Prostate gland (tissue), 2 donors: ENCODE measurements at regions of chr15 and their contacts with region 1.

Region 1: GRCh38 chr15:25863111-25863967 is at the start of gene ATP10A:
- DNase-seq: no peak
- H3K4me3 ChIP-seq: peak within 1 kb of the TSS; percentile 49 to 56
- H3K27ac ChIP-seq: peak within 1 kb of the TSS; percentile 66 to 72
- H3K4me1 ChIP-seq: peaks cover 5% of the 10 kb centered on the region
- H3K27me3 ChIP-seq: no peaks in the 10 kb centered on the region
- CTCF ChIP-seq: no peak
- POLR2A ChIP-seq: no peak
- total RNA-seq, gene ATP10A: 5.6 to 14.3 TPM

Region 2: GRCh38 chr15:25933456-25934158 is 70.3 kb after region 1 on chr15:
- intact Hi-C with region 1: loop called (anchors 10 kb)
- DNase-seq: peak; percentile 57
- H3K4me3 ChIP-seq: no peak overlapping the region
- H3K27ac ChIP-seq: no peak overlapping the region
- H3K4me1 ChIP-seq: no peaks in the 10 kb centered on the region
- H3K27me3 ChIP-seq: no peaks in the 10 kb centered on the region
- CTCF ChIP-seq: peak; percentile 27 to 66 (median 50)
- POLR2A ChIP-seq: no peak

Region 3: DNA sequence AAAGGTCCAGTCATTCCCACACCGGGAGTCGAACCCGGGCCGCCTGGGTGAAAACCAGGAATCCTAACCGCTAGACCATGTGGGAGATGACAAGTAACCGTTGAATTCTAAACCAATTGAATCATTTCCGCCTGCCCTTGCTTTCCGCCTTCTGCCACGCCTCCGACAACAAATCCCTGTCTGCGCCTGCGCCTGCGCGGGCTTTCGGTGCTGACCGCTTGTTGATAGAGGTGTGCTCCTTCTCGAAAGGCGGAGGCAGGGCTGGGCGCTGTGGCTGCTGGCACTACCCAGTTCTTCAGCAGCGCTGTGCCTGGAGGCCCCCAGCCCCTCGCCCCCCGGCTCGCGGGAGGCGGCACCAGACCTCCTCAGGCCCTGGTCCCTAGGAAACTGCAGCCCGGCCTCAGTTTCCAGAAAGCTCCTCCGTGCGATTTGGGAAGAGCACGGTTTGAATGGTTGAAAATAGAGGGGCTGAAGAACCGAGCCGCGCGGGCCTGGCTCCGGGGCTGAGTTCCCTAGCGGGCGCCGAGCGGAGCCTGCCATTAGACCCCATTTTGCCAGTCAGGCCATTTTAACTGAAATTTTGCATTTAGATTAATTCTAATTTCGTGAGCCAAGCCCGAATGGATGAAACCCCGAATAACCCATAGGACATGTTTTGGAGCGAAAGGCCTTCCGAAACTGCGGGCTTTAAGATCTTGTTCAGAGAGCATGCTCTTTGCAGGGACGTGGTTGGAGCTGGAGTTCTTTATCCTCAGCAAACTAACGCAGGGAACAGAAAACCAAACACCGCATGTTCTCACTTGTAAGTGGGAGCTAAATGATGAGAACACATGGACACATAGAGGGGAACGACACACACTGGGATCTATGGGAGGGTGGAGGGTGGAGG is 219.1 kb after region 1 on chr15:
- intact Hi-C with region 1: loop called (anchors 10 kb)
- DNase-seq: peak; percentile 98
- H3K4me3 ChIP-seq: peak overlapping the region; percentile 66 to 72
- H3K27ac ChIP-seq: peak overlapping the region; percentile 92 to 96
- H3K4me1 ChIP-seq: no peaks in the 10 kb centered on the region
- H3K27me3 ChIP-seq: no peaks in the 10 kb centered on the region
- CTCF ChIP-seq: peak in 2 of 4 experiments; percentile 4 to 17
- POLR2A ChIP-seq: peak; percentile 93